B cell (primary cell): ENCODE measurements at regions of chr2 and their contacts with region 1.

Region 1: GRCh38 chr2:195632856-195633572 is 24.0 kb upstream of the SLC39A10 start:
- DNase-seq: peak; percentile 28
- ATAC-seq: peak; percentile 36
- H3K4me3 ChIP-seq: peak overlapping the region in 1 of 5 experiments; percentile 11
- H3K4me3 Mint-ChIP-seq: peak overlapping the region; percentile 37
- H3K27ac ChIP-seq: peak overlapping the region; percentile 57 to 77
- H3K27ac Mint-ChIP-seq: peak overlapping the region; percentile 82
- H3K4me1 ChIP-seq: peaks cover 13 to 20% of the 10 kb centered on the region in 2 donors
- H3K4me1 Mint-ChIP-seq: peaks cover 19% of the 10 kb centered on the region
- H3K27me3 ChIP-seq: no peaks in the 10 kb centered on the region
- H3K27me3 Mint-ChIP-seq: no peaks in the 10 kb centered on the region
- CTCF ChIP-seq: no peak

Region 2: GRCh38 chr2:195419033-195419432 is 214.0 kb before region 1 on chr2:
- CTCF ChIA-PET with region 1: no interaction called
- POLR2A ChIA-PET with region 1: no interaction called
- intact Hi-C with region 1: no loop called
- DNase-seq: no peak
- ATAC-seq: no peak
- H3K4me3 ChIP-seq: no peak overlapping the region
- H3K4me3 Mint-ChIP-seq: no peak overlapping the region
- H3K27ac ChIP-seq: no peak overlapping the region
- H3K27ac Mint-ChIP-seq: no peak overlapping the region
- H3K4me1 ChIP-seq: peaks cover 9 to 10% of the 10 kb centered on the region in 2 donors
- H3K4me1 Mint-ChIP-seq: peaks cover 10% of the 10 kb centered on the region
- H3K27me3 ChIP-seq: no peaks in the 10 kb centered on the region
- H3K27me3 Mint-ChIP-seq: no peaks in the 10 kb centered on the region
- CTCF ChIP-seq: no peak

Region 3: DNA sequence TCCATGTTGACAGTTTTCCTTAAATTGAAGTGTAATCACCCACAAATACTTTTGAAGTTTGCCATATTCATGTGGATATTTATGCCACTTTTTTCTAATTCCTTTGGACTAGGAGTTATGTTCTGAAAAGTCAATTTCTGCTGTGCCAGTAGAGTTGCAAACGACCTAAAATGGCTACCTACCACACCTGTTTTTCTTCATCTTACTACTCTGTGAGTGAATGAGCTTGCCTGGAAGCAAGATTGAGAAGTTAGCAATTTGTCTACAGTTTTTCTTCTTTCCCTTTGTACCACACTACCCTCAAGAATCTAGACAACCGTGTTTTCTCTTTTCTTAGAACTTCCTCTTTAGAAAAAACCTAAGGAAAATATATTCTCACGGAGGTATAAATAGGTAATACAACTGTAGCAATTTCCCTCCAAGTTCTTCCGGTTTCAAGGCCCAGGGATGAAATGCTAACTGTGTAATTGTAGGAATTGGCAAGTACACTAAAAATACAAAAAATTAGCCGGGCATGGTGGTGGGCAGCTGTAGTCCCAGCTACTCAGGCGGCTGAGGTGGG is 16.7 kb after region 1 on chr2:
- CTCF ChIA-PET with region 1: interaction called, 3 read pairs
- POLR2A ChIA-PET with region 1: interaction called, 5 read pairs
- intact Hi-C with region 1: loop called (anchors 2 kb)
- DNase-seq: peak; percentile 76
- ATAC-seq: peak; percentile 18
- H3K4me3 ChIP-seq: peak overlapping the region; percentile 11 to 48 (median 38)
- H3K4me3 Mint-ChIP-seq: peak overlapping the region; percentile 86
- H3K27ac ChIP-seq: peak overlapping the region; percentile 93 to 95
- H3K27ac Mint-ChIP-seq: peak overlapping the region; percentile 94
- H3K4me1 ChIP-seq: peaks cover 66 to 67% of the 10 kb centered on the region in 2 donors
- H3K4me1 Mint-ChIP-seq: peaks cover 67% of the 10 kb centered on the region
- H3K27me3 ChIP-seq: no peaks in the 10 kb centered on the region
- H3K27me3 Mint-ChIP-seq: no peaks in the 10 kb centered on the region
- CTCF ChIP-seq: no peak